GM13977 (cell line): ENCODE measurements at regions of chr6 and their contacts with region 1.

Region 1: DNA sequence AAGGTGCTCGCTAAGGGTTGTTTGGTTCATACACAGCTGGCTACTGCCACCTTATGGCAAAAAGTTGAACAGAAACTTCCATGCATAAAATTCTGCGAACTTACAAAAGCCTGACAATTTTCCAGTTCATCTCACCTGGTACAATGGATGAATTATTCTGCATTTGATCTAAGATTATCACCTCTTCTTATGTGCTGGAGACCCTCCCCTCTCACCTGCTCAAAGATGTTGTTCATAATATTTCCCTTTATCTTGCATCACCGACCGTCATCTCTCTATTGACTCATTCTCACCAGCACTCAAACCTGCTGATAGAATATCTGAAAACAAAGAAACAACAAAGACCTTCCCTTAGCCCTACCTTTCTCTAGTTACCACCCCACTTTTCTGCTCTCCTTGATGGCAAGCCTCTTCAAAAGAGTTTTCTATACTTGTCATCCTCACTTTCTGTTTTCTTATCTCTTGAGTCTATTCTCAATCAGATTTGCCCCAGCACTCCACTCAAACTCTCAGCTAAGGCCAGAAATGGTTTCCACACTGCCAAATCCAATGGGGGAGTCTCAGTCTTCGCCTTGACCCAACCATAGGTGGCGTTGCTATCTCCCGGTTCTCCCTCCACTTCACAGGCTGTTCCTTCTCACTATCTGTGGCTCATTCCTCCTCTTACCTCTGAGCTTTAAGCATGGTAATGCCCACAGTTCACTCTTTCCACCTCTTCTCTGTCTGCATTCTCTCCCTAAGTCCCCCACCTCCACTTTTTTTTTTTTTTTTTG is 25.8 kb downstream of the SNRNP48 start:
- DNase-seq: peak; percentile 45
- CTCF ChIP-seq: peak; percentile 67

Region 2: GRCh38 chr6:6724539-6725467 is 891.0 kb before region 1 on chr6:
- in situ Hi-C with region 1: loop called (anchors 25 kb)
- DNase-seq: peak; percentile 86
- CTCF ChIP-seq: peak; percentile 76

Region 3: GRCh38 chr6:7276199-7276524 is 339.6 kb before region 1 on chr6:
- in situ Hi-C with region 1: loop called (anchors 5 kb)
- DNase-seq: no peak
- CTCF ChIP-seq: no peak